ENCODE measurements at regions of chr7 and their contacts with region 1.

Region 1: DNA sequence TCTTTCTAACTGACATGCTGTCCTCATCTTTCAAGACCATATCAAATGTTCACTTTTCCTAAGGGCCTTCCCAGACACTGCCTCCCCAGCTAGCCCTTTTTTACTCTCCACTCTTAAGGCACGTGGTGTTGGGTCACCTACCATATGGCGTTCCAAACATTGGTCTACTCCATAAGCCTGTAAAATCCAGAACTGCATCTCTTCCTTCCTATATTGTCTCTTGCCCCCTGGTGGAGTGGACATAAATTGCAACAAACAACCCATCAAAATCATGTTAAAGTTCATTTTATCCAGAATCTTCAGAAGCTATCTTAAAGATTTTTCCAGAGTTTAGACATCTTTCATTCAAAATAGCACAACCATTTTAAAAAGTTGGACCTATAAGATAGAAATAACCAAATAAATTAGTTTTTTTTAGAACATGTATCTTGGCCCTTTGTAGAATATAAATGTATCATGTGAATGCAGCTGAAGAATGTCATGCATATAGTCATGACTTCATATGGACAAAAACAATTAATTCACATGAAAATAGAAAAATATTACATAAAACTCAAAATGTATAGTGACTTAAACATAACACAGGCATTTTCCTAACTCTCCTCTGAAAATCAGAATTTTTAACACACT is 180.6 kb upstream of the CHRM2 start:
- DNase-seq: peak; percentile 75
- H3K4me3 ChIP-seq: no peak overlapping the region
- H3K27ac ChIP-seq: no peak overlapping the region
- H3K4me1 ChIP-seq: no peaks in the 10 kb centered on the region
- H3K27me3 ChIP-seq: no peaks in the 10 kb centered on the region
- CTCF ChIP-seq: peak; percentile 80

Region 2: GRCh38 chr7:136114966-136115762 is 572.6 kb before region 1 on chr7:
- CTCF ChIA-PET with region 1: no interaction called
- POLR2A ChIA-PET with region 1: no interaction called
- intact Hi-C with region 1: loop called (anchors 10 kb)
- DNase-seq: peak; percentile 74
- H3K4me3 ChIP-seq: no peak overlapping the region
- H3K27ac ChIP-seq: no peak overlapping the region
- H3K4me1 ChIP-seq: peaks cover 8% of the 10 kb centered on the region
- H3K27me3 ChIP-seq: no peaks in the 10 kb centered on the region
- CTCF ChIP-seq: peak; percentile 84

Region 3: GRCh38 chr7:136405931-136406777 is 281.7 kb before region 1 on chr7:
- CTCF ChIA-PET with region 1: no interaction called
- POLR2A ChIA-PET with region 1: no interaction called
- intact Hi-C with region 1: loop called (anchors 2 kb)
- DNase-seq: peak; percentile 90
- H3K4me3 ChIP-seq: peak overlapping the region; percentile 44
- H3K27ac ChIP-seq: peak overlapping the region; percentile 71
- H3K4me1 ChIP-seq: peaks cover 33% of the 10 kb centered on the region
- H3K27me3 ChIP-seq: no peaks in the 10 kb centered on the region
- CTCF ChIP-seq: peak; percentile 87

Region 4: GRCh38 chr7:136709876-136710275 is 22.1 kb after region 1 on chr7:
- CTCF ChIA-PET with region 1: no interaction called
- POLR2A ChIA-PET with region 1: no interaction called
- intact Hi-C with region 1: no loop called
- DNase-seq: no peak
- H3K4me3 ChIP-seq: no peak overlapping the region
- H3K27ac ChIP-seq: no peak overlapping the region
- H3K4me1 ChIP-seq: no peaks in the 10 kb centered on the region
- H3K27me3 ChIP-seq: no peaks in the 10 kb centered on the region
- CTCF ChIP-seq: no peak

Region 5: DNA sequence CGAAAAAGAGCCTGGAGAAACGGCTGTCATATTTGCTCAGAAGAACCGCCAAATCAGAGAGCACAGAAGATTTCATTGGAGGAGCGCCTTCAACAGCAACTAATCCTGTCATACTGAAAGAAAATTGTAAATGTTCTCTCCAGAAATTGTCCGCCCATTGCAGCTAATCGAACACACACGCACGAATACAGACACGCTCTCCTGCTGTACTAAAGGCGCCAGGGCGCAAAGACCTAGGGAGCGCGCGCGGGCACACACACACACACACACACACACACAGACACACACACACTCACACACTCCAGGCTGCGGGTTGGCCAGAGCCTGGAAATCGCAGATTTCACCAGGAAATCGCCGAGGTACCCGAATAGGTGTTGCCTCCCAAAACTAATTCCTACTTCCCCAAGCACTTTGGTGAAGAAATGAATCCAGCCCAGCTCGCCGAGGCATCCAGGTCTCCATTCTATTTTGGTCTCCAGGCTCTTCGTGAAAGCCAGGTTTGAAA is 180.7 kb after region 1 on chr7 and contains the start of gene CHRM2:
- CTCF ChIA-PET with region 1: no interaction called
- POLR2A ChIA-PET with region 1: no interaction called
- intact Hi-C with region 1: no loop called
- DNase-seq: peak; percentile 45
- H3K4me3 ChIP-seq: peak within 1 kb of the TSS; percentile 52
- H3K27ac ChIP-seq: no peak within 1 kb of the TSS
- H3K4me1 ChIP-seq: peaks cover 14% of the 10 kb centered on the region
- H3K27me3 ChIP-seq: peaks cover 24% of the 10 kb centered on the region
- CTCF ChIP-seq: no peak
- total RNA-seq, gene CHRM2: 4.6 and 4.8 TPM in 2 replicates